HepG2 (cell line): ENCODE measurements at regions of chr3 and their contacts with region 1.

Region 1: GRCh38 chr3:138915503-138916498 is 31.1 kb downstream of the FOXL2 start:
- DNase-seq: peak; percentile 76
- ATAC-seq: peak; percentile 94
- H3K4me3 ChIP-seq: peak overlapping the region; percentile 82 to 89 (median 83)
- H3K27ac ChIP-seq: peak overlapping the region; percentile 83
- H3K4me1 ChIP-seq: peaks cover 15% of the 10 kb centered on the region
- H3K27me3 ChIP-seq: no peaks in the 10 kb centered on the region; a peak in 2 of 5 replicates
- CTCF ChIP-seq: peak; percentile 98
- EP300 ChIP-seq: no peak
- POLR2A ChIP-seq: peak in 1 of 2 experiments; percentile 41; a peak in 1 of 4 replicates
- RAD21 ChIP-seq: peak; percentile 95

Region 2: DNA sequence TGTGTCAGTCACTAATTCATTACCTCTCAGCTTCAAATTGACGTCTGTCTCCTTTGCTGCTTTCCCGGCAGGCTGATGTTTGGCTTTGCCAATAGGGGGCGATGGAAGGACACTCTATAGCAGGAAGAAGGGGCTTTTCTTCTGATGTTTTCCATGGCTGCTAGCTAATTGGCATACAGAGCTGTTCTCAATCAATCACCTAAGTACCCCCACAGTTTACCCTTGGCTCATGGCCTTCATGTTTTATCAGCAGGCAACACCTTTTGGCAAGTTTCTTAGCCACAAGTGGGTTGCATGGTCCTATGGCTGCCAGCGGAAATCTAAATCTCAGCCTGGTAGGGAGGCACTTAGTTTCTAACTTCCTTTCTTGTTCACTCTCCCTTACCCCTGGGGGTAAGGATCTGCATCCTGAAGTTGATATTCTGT is 436.4 kb before region 1 on chr3:
- CTCF ChIA-PET with region 1: interaction called, 5 read pairs
- POLR2A ChIA-PET with region 1: no interaction called
- in situ Hi-C with region 1: loop called (anchors 5 kb)
- intact Hi-C with region 1: no loop called
- DNase-seq: peak; percentile 50
- ATAC-seq: peak; percentile 78
- H3K4me3 ChIP-seq: no peak overlapping the region
- H3K27ac ChIP-seq: no peak overlapping the region
- H3K4me1 ChIP-seq: no peaks in the 10 kb centered on the region
- H3K27me3 ChIP-seq: no peaks in the 10 kb centered on the region
- CTCF ChIP-seq: peak; percentile 84
- EP300 ChIP-seq: no peak
- POLR2A ChIP-seq: no peak
- RAD21 ChIP-seq: peak; percentile 61

Region 3: GRCh38 chr3:138824114-138824506 is 91.7 kb before region 1 on chr3:
- CTCF ChIA-PET with region 1: no interaction called
- POLR2A ChIA-PET with region 1: interaction called, 26 read pairs
- in situ Hi-C with region 1: no loop called
- intact Hi-C with region 1: no loop called
- DNase-seq: no peak
- ATAC-seq: peak; percentile 69
- H3K4me3 ChIP-seq: no peak overlapping the region
- H3K27ac ChIP-seq: peak overlapping the region; percentile 67
- H3K4me1 ChIP-seq: peaks cover 50% of the 10 kb centered on the region
- H3K27me3 ChIP-seq: no peaks in the 10 kb centered on the region; a peak in 1 of 5 replicates
- CTCF ChIP-seq: no peak
- EP300 ChIP-seq: no peak
- POLR2A ChIP-seq: no peak
- RAD21 ChIP-seq: no peak

Region 4: GRCh38 chr3:138842483-138843188 is 73.2 kb before region 1 on chr3:
- CTCF ChIA-PET with region 1: no interaction called
- POLR2A ChIA-PET with region 1: interaction called, 15 read pairs
- in situ Hi-C with region 1: no loop called
- intact Hi-C with region 1: no loop called
- DNase-seq: no peak
- ATAC-seq: no peak; the same call in 2 of the 3 replicates
- H3K4me3 ChIP-seq: no peak overlapping the region
- H3K27ac ChIP-seq: no peak overlapping the region
- H3K4me1 ChIP-seq: peaks cover 52% of the 10 kb centered on the region
- H3K27me3 ChIP-seq: no peaks in the 10 kb centered on the region
- CTCF ChIP-seq: no peak
- EP300 ChIP-seq: no peak
- POLR2A ChIP-seq: no peak
- RAD21 ChIP-seq: no peak

Region 5: GRCh38 chr3:138862924-138863775 is 52.7 kb before region 1 on chr3:
- CTCF ChIA-PET with region 1: no interaction called
- POLR2A ChIA-PET with region 1: interaction called, 57 read pairs
- in situ Hi-C with region 1: no loop called
- intact Hi-C with region 1: loop called (anchors 2 kb)
- DNase-seq: peak; percentile 97
- ATAC-seq: peak; percentile 95
- H3K4me3 ChIP-seq: peak overlapping the region; percentile 6 to 45 (median 11); a peak in 3 of 6 replicates
- H3K27ac ChIP-seq: peak overlapping the region; percentile 93
- H3K4me1 ChIP-seq: peaks cover 72% of the 10 kb centered on the region
- H3K27me3 ChIP-seq: no peaks in the 10 kb centered on the region
- CTCF ChIP-seq: peak; percentile 58
- EP300 ChIP-seq: peak; percentile 39 to 90; a peak in 3 of 4 replicates
- POLR2A ChIP-seq: peak; percentile 65 to 70
- RAD21 ChIP-seq: peak; percentile 41; the same call in 1 of the 2 replicates

Region 6: DNA sequence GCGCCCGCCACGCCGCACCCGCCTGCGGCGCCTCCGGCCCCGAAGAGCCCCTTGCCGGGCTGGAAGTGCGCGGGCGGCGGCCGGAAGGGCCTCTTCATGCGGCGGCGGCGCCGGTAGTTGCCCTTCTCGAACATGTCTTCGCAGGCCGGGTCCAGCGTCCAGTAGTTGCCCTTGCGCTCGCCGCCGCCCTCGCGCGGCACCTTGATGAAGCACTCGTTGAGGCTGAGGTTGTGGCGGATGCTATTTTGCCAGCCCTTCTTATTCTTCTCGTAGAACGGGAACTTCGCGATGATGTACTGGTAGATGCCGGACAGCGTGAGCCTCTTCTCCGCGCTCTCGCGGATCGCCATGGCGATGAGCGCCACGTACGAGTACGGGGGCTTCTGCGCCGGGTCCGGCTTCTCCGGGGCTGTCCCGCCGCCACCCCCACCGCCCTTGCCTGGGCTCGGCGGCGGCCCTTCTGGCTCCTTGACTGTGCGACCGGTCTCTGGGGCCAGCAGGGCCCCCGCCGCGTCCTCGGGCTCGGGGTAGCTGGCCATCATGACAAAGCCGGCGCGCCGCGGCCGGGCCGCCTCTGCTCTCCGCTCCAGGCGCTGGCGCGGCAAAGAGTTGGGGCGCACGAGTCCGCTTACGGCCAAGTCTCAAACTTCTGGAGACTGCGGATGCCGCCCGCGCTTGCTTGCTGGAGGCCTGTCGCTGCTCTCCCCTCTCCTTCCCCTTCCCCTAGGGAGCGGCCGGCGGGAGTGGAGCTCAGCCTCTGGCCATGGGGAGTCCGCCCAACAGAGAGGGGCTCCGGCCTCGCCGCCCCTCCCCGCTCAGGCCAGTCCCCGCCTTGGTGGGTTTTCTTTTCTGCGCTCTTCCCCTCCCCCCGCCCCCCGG is 30.6 kb after region 1 on chr3:
- CTCF ChIA-PET with region 1: no interaction called
- POLR2A ChIA-PET with region 1: no interaction called
- in situ Hi-C with region 1: no loop called
- intact Hi-C with region 1: no loop called
- DNase-seq: no peak
- ATAC-seq: peak; percentile 4; the same call in 1 of the 3 replicates
- H3K4me3 ChIP-seq: peak overlapping the region in 1 of 3 experiments; percentile 53; a peak in 2 of 6 replicates
- H3K27ac ChIP-seq: no peak overlapping the region
- H3K4me1 ChIP-seq: peaks cover 15% of the 10 kb centered on the region
- H3K27me3 ChIP-seq: peaks cover 33 to 93% of the 10 kb centered on the region in 2 experiments
- CTCF ChIP-seq: no peak
- EP300 ChIP-seq: no peak
- POLR2A ChIP-seq: no peak
- RAD21 ChIP-seq: no peak

Region 7: DNA sequence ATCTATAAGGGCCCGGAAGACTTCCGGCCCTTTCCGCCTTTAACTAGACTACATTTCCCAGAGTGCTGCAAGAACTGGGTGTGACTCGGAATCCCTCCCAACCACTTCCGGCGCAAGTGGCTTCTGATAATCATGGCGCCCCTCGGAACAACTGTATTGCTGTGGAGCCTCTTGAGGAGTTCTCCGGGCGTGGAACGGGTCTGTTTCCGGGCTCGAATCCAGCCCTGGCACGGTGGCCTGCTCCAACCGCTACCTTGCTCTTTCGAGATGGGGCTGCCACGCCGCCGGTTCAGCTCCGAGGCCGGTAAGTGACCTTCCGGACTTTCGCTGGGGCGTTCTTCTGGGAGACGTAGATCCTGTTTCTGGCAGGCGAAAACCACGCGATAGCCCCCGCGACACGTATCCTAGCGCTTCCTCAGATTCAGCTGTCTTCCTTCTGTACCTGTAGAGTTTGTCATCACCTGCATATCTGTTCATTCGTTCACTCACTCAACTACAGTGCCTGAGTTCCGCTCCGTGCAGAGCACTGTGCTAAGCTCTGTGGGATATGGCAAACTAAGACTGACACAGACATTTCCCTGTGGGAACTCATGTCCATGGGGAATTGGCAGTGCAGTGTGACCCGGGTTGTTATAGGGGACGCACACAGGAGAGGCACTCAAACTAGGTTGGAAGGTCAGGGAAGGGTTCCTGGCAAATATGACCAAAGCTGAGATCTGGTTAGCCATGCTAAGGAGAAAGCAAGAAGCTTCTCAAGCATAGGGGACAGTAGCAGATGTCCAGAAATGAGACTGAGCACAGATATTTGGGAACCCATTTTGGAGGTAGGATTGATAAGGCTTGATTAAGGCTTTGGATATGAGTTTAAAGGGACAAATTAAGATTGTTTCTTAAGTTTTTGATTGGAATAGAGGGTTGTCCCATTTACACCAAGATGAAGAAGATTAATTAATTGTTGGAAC is 428.4 kb after region 1 on chr3 and contains the start of gene MRPS22:
- CTCF ChIA-PET with region 1: no interaction called
- POLR2A ChIA-PET with region 1: no interaction called
- in situ Hi-C with region 1: no loop called
- intact Hi-C with region 1: no loop called
- DNase-seq: peak; percentile 89
- ATAC-seq: peak; percentile 97
- H3K4me3 ChIP-seq: peak within 1 kb of the TSS; percentile 89 to 98 (median 97)
- H3K27ac ChIP-seq: peak within 1 kb of the TSS; percentile 95
- H3K4me1 ChIP-seq: peaks cover 24% of the 10 kb centered on the region
- H3K27me3 ChIP-seq: no peaks in the 10 kb centered on the region; a peak in 1 of 5 replicates
- CTCF ChIP-seq: no peak; the same call in 1 of the 2 replicates
- EP300 ChIP-seq: 0 out of 4 replicates have a peak, but pooled peaks of 1 of the 2 experiments have one; percentile 3
- POLR2A ChIP-seq: peak in 1 of 2 experiments; percentile 78
- RAD21 ChIP-seq: no peak
- total RNA-seq, gene MRPS22: 113 and 139 TPM in 2 replicates